ENCODE measurements at regions of chr4 and their contacts with region 1.

Region 1: DNA sequence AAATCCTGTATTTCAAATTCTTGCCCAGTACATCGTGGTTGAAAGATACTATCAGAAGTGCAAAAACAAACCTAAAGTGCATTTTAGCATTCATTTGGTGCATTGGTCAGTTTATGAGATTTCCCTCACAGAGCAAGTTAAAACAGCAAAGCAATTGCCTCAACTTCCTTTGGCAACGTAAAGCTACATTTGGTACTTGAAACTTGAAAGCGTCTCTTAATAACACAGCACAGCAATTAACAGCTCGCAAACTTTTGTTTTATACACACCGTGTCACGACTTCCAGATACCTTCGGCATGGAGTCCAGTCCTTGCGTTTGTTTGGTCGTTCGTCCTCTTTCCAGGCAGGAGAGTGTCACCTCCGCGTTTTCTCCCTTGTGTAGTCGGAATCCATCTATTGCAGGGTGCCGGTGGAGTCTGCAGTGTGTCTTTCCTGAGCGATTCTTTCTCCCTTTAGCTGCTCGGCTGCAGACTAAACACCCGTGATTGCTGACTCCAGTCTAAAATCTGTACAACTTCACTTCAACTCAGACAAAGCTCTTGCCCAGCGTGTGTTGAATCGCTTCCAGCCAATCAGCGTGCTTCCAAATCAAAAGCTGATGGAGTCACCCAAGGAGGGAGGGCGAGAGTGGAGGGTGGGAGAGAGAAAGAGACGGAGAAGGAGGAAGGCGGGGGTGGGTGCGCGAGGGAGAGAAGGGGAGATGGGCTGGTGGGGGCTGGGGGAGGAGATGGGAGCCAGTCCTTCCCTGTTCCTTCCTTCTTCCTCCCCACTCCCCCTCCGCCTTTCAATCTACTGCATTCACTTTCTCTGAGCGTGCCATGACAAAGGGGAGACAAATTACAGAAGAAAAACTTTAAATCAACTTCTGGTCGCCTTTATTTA is at the start of gene PCDH18:
- DNase-seq: peak; percentile 96
- H3K4me3 ChIP-seq: peak within 1 kb of the TSS; percentile 98
- H3K27ac ChIP-seq: peak within 1 kb of the TSS; percentile 88
- H3K4me1 ChIP-seq: peaks cover 23% of the 10 kb centered on the region
- H3K27me3 ChIP-seq: no peaks in the 10 kb centered on the region
- total RNA-seq, gene PCDH18: 236 and 255 TPM in 2 replicates

Region 2: DNA sequence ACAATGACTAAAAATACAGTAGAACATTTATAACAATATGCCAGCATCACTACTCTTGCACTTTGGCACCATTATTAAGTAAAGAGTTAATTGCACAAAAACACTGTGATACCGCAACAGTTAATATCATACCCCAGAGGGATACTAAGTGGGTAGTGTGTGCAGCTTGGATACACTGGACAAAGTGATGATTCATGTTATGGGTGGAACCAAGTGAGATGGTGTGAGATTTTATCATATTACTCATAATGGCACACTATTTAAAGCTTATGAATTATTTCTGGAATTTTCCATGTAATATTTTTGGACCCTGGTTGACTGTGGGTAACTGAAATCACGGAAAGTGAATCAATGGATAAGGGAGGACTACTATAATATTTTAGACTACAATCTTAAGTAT is 265.2 kb before region 1 on chr4:
- in situ Hi-C with region 1: no loop called
- DNase-seq: peak; percentile 87
- H3K4me3 ChIP-seq: peak overlapping the region; percentile 11
- H3K27ac ChIP-seq: peak overlapping the region; percentile 49
- H3K4me1 ChIP-seq: peaks cover 23% of the 10 kb centered on the region
- H3K27me3 ChIP-seq: no peaks in the 10 kb centered on the region

Region 3: DNA sequence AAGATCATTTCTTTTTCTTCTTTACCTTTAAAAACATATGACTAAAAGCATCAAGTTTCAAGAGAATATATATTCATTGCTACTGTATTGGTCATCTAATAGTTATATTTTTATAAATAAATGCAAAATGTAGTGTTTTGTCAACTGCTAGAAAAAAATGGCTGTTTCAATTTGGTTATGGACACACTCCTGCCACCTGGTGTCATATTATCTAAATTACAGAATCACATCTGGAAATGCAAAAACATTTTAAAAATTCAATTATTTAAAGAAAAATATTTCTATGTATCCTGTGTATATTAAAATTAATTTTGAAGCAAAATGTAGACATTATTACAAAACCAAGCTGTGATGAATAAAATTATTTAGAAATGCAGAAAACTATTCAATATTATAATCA is 329.5 kb after region 1 on chr4:
- in situ Hi-C with region 1: loop called (anchors 25 kb)
- DNase-seq: peak; percentile 63
- H3K4me3 ChIP-seq: no peak overlapping the region
- H3K27ac ChIP-seq: no peak overlapping the region
- H3K4me1 ChIP-seq: no peaks in the 10 kb centered on the region
- H3K27me3 ChIP-seq: no peaks in the 10 kb centered on the region

Region 4: DNA sequence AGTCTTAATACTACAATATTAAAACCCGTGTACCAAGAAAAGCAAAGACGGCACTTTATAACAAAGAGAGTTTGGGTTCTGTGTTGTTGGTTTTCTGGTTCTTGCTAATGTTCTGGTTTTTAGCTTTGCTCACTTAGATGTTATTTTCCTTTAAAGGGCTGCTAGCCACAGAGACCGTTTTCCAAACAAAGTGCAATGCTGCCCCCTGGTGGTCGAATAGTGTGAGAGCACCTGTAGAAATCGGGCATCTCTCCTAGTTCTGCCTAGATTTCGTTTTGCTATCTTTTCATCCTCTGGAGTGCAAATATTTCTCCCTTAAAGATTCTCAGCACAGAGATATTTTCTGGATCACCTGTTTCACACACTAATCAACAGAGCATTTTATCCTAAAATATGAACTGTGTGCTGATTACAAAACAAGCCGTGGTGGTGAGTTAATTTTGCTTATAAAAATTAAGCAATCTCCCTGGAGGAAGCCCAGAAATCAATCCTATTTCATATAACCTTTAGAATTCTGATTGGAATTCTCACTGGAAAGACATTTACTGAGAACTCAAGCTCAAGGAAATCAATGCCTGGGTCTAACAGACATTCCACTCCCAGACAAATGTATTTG is 1148.9 kb after region 1 on chr4:
- in situ Hi-C with region 1: loop called (anchors 25 kb)
- DNase-seq: peak; percentile 82
- H3K4me3 ChIP-seq: peak overlapping the region; percentile 48
- H3K27ac ChIP-seq: no peak overlapping the region
- H3K4me1 ChIP-seq: peaks cover 4% of the 10 kb centered on the region; the same call in 1 of the 2 replicates
- H3K27me3 ChIP-seq: no peaks in the 10 kb centered on the region

Measured in GM23248 (cell line).